Mucosa of descending colon (tissue), 3 donors: ENCODE measurements at regions of chr11 and their contacts with region 1.

Region 1: GRCh38 chr11:44556735-44557409 is 8.6 kb upstream of the CD82 start:
- DNase-seq: peak in 2 of 3 donors; percentile 70 to 82
- ATAC-seq: peak; percentile 74
- H3K4me3 ChIP-seq: no peak overlapping the region
- H3K4me1 ChIP-seq: no peaks in the 10 kb centered on the region
- CTCF ChIP-seq: peak; percentile 69

Region 2: DNA sequence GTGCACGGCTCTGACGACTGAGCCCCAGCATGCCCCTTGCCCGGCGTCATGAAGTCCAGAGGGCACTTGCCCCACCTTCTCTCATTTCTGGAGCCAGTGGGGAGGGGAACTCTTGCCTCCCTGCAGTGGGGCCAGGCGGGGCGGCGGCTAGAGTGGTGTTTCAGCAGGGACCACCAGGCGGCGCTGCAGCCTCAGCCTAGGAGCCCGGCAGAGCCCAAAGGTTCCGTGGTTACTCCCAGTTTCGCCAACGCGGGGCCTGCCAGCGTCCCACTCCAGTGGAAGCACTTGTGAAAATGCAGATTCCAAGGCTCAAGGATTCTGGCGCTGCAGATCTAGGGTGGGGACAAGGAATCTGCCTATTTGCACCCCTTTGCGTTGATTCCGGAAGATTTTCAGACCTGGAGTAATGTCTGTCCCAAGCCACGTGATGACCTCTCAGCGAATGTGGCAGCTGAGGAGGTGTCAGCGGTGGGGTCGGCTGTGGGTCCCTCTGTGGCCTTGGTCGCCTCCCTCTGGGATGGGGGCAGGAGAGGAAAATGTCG is 64.3 kb after region 1 on chr11:
- intact Hi-C with region 1: loop called (anchors 2 kb)
- DNase-seq: peak in 2 of 3 donors; percentile 81 to 87
- ATAC-seq: peak; percentile 86
- H3K4me3 ChIP-seq: no peak overlapping the region
- H3K4me1 ChIP-seq: peaks cover 4% of the 10 kb centered on the region
- CTCF ChIP-seq: peak; percentile 94